ENCODE measurements at regions of chr18 and their contacts with region 1.

Region 1: DNA sequence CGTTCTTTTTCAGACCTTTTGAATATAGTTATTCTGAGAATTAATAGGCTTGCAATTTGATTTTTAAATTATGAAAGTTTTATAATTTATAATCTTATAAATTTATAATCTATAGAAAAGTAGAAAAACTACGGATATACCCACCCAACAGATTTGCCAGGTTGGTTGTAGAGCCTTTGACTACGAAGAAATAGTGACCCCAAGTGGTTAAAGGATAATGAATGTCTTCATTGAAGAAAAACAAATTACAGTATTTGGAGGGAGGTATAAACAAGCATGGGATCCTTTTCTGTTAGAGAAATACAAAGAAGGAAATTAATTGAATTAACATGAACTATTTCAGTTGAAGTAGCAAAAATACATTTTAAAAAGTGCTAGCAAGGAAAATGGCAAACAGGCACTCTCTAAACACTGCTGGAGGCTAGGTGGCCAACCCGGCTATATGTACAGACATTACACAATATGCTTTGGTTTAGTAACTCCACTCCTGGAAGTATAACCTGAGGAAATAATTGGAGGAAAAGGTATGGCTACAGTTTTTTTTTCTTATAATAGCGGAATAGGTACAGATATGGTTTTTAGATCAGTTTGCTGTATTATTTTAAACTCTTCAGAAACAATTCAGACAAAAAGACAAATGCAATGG is 110.9 kb downstream of the MIB1 start:
- DNase-seq: no peak
- H3K4me3 ChIP-seq: no peak overlapping the region
- H3K27ac ChIP-seq: no peak overlapping the region
- H3K4me1 ChIP-seq: no peaks in the 10 kb centered on the region
- H3K27me3 ChIP-seq: no peaks in the 10 kb centered on the region
- CTCF ChIP-seq: peak; percentile 17 to 50 (median 37)
- POLR2A ChIP-seq: no peak

Region 2: DNA sequence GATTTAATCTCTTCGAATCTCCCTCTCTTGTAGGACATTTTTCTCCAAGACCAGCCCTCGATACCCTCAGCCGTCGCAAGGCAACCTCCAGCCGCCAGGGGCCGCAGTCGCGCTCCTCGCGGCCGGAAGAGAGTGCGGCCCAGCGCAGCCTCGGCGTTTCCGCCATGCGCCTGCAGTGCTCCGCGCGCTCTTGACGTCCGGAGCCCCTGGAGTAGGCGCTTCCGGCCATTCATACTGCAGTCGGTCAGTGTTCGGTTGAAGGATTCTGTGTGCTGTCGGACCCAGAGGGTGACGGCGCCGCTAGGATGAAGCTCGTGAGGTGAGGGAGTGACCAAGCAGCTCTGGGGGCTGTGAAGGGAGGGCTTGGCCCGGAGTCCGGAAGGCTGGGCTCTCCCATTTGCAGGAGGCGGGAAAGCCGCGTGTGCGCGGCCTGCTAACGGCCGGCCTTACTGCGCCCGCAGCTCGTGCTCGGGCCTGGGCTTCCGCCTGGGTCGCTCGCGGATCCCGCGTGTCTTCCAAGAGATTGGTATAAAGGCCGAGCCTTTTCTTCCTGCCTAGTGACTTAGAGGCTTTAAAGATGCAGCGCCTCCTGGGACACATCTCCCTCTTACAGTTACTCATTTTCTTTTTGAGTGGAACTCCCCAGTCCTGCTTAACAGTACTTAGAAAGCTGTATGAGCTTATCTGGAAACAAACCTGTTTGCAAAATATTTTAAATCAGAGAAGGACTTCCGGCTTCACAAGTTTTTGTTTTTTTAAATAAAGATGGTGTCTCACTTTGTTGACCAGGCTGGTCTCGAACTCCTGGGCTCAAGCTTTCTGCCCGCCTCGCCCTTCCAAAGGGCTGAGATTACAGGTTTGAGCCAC is 239.1 kb before region 1 on chr18 and contains the start of gene SNRPD1:
- intact Hi-C with region 1: loop called in 1 of 2 experiments (anchors 10 kb)
- DNase-seq: peak; percentile 83 to 91 (median 89)
- H3K4me3 ChIP-seq: peak within 1 kb of the TSS; percentile 21 to 89 (median 46)
- H3K27ac ChIP-seq: peak within 1 kb of the TSS; percentile 56 to 90 (median 76)
- H3K4me1 ChIP-seq: peaks cover 9 to 22% of the 10 kb centered on the region in 2 donors
- H3K27me3 ChIP-seq: no peaks in the 10 kb centered on the region
- CTCF ChIP-seq: peak; percentile 86 to 94 (median 92)
- POLR2A ChIP-seq: peak; percentile 19 to 44
- total RNA-seq, gene SNRPD1: 2.6 to 75.9 (median 23.8) TPM

Region 3: GRCh38 chr18:22250591-22250996 is 399.1 kb after region 1 on chr18:
- intact Hi-C with region 1: no loop called
- DNase-seq: peak in 1 of 7 donors; percentile 16
- H3K4me3 ChIP-seq: no peak overlapping the region
- H3K27ac ChIP-seq: no peak overlapping the region
- H3K4me1 ChIP-seq: peaks cover 0 to 6% of the 10 kb centered on the region in 2 donors
- H3K27me3 ChIP-seq: no peaks in the 10 kb centered on the region
- CTCF ChIP-seq: no peak
- POLR2A ChIP-seq: no peak